K562 (cell line): ENCODE measurements at regions of chr14 and their contacts with region 1.

Region 1: GRCh38 chr14:103141119-103141796 is 18.0 kb downstream of the TNFAIP2 start:
- DNase-seq: peak; percentile 69 to 80 (median 72)
- ATAC-seq: peak; percentile 82
- H3K4me3 ChIP-seq: no peak overlapping the region
- H3K27ac ChIP-seq: no peak overlapping the region
- H3K4me1 ChIP-seq: peaks cover 19 to 33% of the 10 kb centered on the region in 2 experiments; a peak in 4 of 5 replicates
- H3K27me3 ChIP-seq: no peaks in the 10 kb centered on the region
- CTCF ChIP-seq: peak; percentile 78 to 87 (median 82)
- EP300 ChIP-seq: no peak
- POLR2A ChIP-seq: no peak
- RAD21 ChIP-seq: peak; percentile 44 to 79

Region 2: GRCh38 chr14:103078093-103078749 is 63.0 kb before region 1 on chr14:
- CTCF ChIA-PET with region 1: no interaction called
- POLR2A ChIA-PET with region 1: no interaction called
- in situ Hi-C with region 1: no loop called
- intact Hi-C with region 1: loop called (anchors 2 kb)
- DNase-seq: peak; percentile 63 to 87 (median 70)
- ATAC-seq: peak; percentile 67
- H3K4me3 ChIP-seq: no peak overlapping the region
- H3K27ac ChIP-seq: no peak overlapping the region
- H3K4me1 ChIP-seq: peaks cover 3 to 37% of the 10 kb centered on the region in 2 experiments; a peak in 4 of 5 replicates
- H3K27me3 ChIP-seq: no peaks in the 10 kb centered on the region; a peak in 1 of 5 replicates
- CTCF ChIP-seq: peak; percentile 78 to 81 (median 78)
- EP300 ChIP-seq: no peak
- POLR2A ChIP-seq: no peak
- RAD21 ChIP-seq: peak; percentile 24 to 73; a peak in 3 of 4 replicates

Region 3: GRCh38 chr14:103104654-103105452 is 36.4 kb before region 1 on chr14:
- CTCF ChIA-PET with region 1: interaction called, 9 read pairs
- POLR2A ChIA-PET with region 1: interaction called, 3 read pairs
- in situ Hi-C with region 1: no loop called
- intact Hi-C with region 1: loop called (anchors 2 kb)
- DNase-seq: peak; percentile 71 to 72 (median 71)
- ATAC-seq: peak; percentile 88
- H3K4me3 ChIP-seq: no peak overlapping the region
- H3K27ac ChIP-seq: no peak overlapping the region; the same call in 2 of the 3 replicates
- H3K4me1 ChIP-seq: peaks cover 31 to 87% of the 10 kb centered on the region in 2 experiments
- H3K27me3 ChIP-seq: no peaks in the 10 kb centered on the region
- CTCF ChIP-seq: peak; percentile 80 to 88 (median 85)
- EP300 ChIP-seq: no peak
- POLR2A ChIP-seq: 0 out of 2 replicates have a peak, but pooled peaks have one; percentile 35
- RAD21 ChIP-seq: peak; percentile 89 to 95

Region 4: GRCh38 chr14:103126493-103127304 is 14.6 kb before region 1 on chr14:
- CTCF ChIA-PET with region 1: interaction called, 3 read pairs
- POLR2A ChIA-PET with region 1: interaction called, 15 read pairs
- in situ Hi-C with region 1: no loop called
- intact Hi-C with region 1: no loop called
- DNase-seq: no peak
- ATAC-seq: no peak
- H3K4me3 ChIP-seq: no peak overlapping the region
- H3K27ac ChIP-seq: no peak overlapping the region
- H3K4me1 ChIP-seq: peaks cover 8 to 73% of the 10 kb centered on the region in 2 experiments
- H3K27me3 ChIP-seq: no peaks in the 10 kb centered on the region
- CTCF ChIP-seq: no peak
- EP300 ChIP-seq: no peak
- POLR2A ChIP-seq: no peak
- RAD21 ChIP-seq: no peak